H1 (cell line): ENCODE measurements at regions of chr2 and their contacts with region 1.

Region 1: DNA sequence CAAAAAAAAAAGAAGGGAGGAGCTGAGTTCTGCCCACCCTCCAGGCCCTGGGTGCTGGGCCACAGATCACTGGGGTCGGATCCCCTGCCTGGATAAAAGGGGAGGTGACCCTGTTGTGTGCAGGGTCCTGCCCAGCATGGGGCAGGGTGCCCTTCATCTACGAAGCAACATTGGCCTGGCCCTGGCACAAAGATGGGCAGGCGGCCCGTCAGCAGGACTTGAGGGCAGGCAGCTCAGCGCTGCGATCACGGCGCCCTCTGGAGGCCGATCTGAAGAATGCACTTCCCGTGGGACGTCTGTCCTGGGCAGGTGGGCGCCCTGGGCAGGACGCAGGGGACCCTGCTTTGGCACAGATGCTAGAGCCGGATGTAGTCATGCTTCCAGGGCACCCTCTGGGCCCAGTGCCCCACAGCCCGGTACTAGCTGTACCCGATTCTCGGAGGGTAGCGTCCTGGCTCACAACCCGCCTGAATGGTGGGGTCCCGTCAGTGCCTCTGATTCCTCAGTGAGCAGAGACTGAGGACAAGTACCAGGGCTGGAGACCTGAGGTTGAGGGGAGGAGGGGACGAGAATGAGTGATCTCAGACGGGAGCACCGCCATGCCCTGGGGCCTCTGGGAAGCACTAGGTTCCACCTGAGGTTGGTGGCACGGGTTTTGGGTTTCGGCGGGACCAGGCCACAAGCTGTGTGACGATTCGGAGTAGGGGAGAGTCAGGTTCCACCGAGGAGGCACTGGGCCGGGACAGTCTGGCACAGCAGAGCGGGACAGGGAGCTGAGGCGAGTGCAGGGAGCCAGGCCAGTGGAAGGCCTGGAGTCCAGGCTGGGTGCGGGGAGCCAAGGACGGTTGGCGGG is 18.0 kb downstream of the ARID5A start:
- DNase-seq: peak in 1 of 2 experiments; percentile 90
- H3K4me3 ChIP-seq: no peak overlapping the region
- H3K27ac ChIP-seq: no peak overlapping the region
- H3K4me1 ChIP-seq: peaks cover 0 to 9% (median 4%) of the 10 kb centered on the region in 4 experiments; a peak in 4 of 7 replicates
- H3K27me3 ChIP-seq: no peaks in the 10 kb centered on the region; a peak in 1 of 7 replicates
- CTCF ChIP-seq: peak in 2 of 3 experiments; percentile 84 to 95; a peak in 3 of 4 replicates
- EP300 ChIP-seq: no peak
- POLR2A ChIP-seq: no peak
- RAD21 ChIP-seq: peak; percentile 76 to 84

Region 2: DNA sequence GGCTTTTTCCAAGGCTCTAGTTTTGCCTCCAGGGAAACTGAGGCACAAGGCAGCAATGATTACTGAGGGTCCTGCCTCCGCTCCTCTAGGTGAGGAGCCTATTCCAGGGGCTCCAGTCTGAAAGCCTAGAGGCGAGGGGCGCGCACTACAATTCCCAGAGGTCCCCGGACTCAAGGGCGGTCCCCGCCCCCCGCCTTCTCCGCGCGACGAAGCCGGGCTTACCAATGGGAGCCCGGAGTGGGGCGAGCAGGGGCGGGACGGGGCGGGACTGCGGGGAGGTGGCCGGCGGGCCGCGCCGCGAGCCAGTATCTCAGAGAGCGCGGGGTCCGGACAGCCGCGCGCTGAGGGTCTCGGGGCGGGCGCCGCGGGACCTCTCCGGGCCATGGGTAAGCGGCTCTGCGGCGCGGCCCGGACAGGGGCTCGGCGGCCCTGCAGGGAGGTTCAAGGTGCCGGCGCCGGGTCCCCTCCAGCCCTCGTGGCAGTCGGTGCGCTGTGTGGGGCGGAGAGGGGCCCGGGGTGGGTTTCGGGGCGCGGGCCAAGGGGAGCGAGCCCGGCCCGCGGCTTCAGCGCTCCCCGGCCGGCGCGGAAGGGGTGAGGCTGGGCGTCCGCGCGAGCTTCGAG is 18.0 kb before region 1 on chr2 and contains the start of gene ARID5A:
- CTCF ChIA-PET with region 1: interaction called, 361 read pairs
- POLR2A ChIA-PET with region 1: interaction called, 33 read pairs
- DNase-seq: peak; percentile 73 to 89
- H3K4me3 ChIP-seq: peak within 1 kb of the TSS; percentile 19 to 73 (median 53)
- H3K27ac ChIP-seq: no peak within 1 kb of the TSS
- H3K4me1 ChIP-seq: peaks cover 5 to 26% (median 20%) of the 10 kb centered on the region in 4 experiments
- H3K27me3 ChIP-seq: peaks cover 10 to 32% (median 26%) of the 10 kb centered on the region in 4 experiments; a peak in 6 of 7 replicates
- CTCF ChIP-seq: no peak
- EP300 ChIP-seq: no peak
- POLR2A ChIP-seq: peak in 1 of 2 experiments; percentile 44; a peak in 2 of 3 replicates
- RAD21 ChIP-seq: no peak
- total RNA-seq, gene ARID5A: 4.4 and 5.3 TPM in 2 replicates

Region 3: GRCh38 chr2:96565111-96565510 is 10.6 kb after region 1 on chr2:
- CTCF ChIA-PET with region 1: interaction called, 40 read pairs
- POLR2A ChIA-PET with region 1: interaction called, 3 read pairs
- DNase-seq: peak in 1 of 2 experiments; percentile 48
- H3K4me3 ChIP-seq: no peak overlapping the region
- H3K27ac ChIP-seq: no peak overlapping the region
- H3K4me1 ChIP-seq: peaks cover 0 to 8% (median 6%) of the 10 kb centered on the region in 4 experiments; a peak in 4 of 7 replicates
- H3K27me3 ChIP-seq: no peaks in the 10 kb centered on the region
- CTCF ChIP-seq: no peak
- EP300 ChIP-seq: no peak
- POLR2A ChIP-seq: no peak
- RAD21 ChIP-seq: no peak

Region 4: DNA sequence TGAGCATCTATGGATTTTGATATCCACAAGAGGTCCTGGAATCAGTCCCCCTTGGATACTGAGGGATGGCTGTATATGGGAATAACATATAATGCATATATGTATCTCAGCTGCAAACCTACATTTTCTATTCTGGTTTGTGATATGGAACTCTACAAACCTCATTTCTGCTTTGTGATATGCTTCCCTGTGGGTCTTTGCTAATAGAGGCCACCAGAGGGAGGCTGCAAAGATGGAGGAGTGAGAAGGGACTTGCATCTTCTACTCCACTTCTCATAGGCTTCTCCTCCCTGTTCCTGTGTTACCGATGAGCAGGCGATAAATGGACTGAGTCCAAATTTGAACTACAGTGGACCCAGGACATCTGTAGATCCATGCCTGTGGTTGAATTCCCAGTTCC is 19.8 kb after region 1 on chr2:
- CTCF ChIA-PET with region 1: interaction called, 15 read pairs
- POLR2A ChIA-PET with region 1: no interaction called
- DNase-seq: no peak
- H3K4me3 ChIP-seq: no peak overlapping the region
- H3K27ac ChIP-seq: no peak overlapping the region
- H3K4me1 ChIP-seq: no peaks in the 10 kb centered on the region
- H3K27me3 ChIP-seq: no peaks in the 10 kb centered on the region
- CTCF ChIP-seq: peak in 1 of 3 experiments; percentile 7; a peak in 1 of 4 replicates
- EP300 ChIP-seq: no peak
- POLR2A ChIP-seq: no peak
- RAD21 ChIP-seq: no peak

Region 5: GRCh38 chr2:96579422-96579821 is 24.9 kb after region 1 on chr2:
- CTCF ChIA-PET with region 1: interaction called, 15 read pairs
- POLR2A ChIA-PET with region 1: no interaction called
- DNase-seq: no peak
- H3K4me3 ChIP-seq: no peak overlapping the region
- H3K27ac ChIP-seq: no peak overlapping the region
- H3K4me1 ChIP-seq: no peaks in the 10 kb centered on the region
- H3K27me3 ChIP-seq: no peaks in the 10 kb centered on the region
- CTCF ChIP-seq: peak in 1 of 3 experiments; percentile 8; a peak in 1 of 4 replicates
- EP300 ChIP-seq: no peak
- POLR2A ChIP-seq: no peak
- RAD21 ChIP-seq: 0 out of 4 replicates have a peak, but pooled peaks of 1 of the 2 experiments have one; percentile 1